Dorsolateral prefrontal cortex (tissue), 120 donors: ENCODE measurements at regions of chr1 and their contacts with region 1.

Region 1: GRCh38 chr1:100037927-100038659 is 68.3 kb downstream of the SLC35A3 start:
- DNase-seq: peak; percentile 81 to 94 (median 90)
- H3K4me3 ChIP-seq: peak overlapping the region; percentile 64 to 98 (median 89)
- H3K27ac ChIP-seq: peak overlapping the region; percentile 82 to 99 (median 97)
- H3K27me3 ChIP-seq: no peaks in the 10 kb centered on the region
- CTCF ChIP-seq: peak in 13 of 56 donors; percentile 3 to 43 (median 14)

Region 2: DNA sequence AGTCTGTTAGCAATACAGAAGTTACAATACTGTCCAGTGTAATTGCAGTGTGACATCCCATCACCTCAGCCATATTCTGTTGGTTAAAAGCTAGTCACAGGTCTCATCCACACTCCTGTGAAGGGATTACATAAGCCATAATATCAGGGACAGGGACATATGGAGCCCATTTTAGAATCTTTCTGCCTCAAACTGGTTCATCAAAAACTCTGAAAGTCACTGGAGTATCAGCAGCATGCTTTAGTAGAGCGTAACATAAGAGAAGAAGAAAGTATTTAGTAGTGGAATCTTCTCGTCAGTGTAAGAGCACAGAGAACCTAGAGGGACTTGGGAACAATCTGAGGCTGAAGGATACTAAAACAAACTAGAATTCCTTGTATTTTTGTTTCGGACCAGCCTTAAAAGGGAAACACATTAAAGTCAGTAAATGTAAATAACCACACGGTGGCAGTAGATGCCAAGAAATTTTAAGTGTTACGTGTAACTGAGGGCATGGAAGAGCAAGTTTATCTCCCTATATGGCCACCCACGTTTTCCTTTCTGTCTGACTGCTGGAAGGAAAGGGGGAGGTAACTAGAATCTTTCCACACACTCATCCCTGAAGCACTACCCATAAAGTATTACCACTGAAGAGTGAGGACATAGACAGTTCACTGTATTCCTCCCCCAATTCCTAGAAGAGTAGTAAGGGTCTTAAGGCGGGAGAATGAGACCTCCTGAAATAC is 229.5 kb before region 1 on chr1:
- intact Hi-C with region 1: loop called in 1 of 2 experiments (anchors 5 kb)
- DNase-seq: peak in 1 of 10 donors; percentile 8
- H3K4me3 ChIP-seq: peak overlapping the region in 30 of 59 donors; percentile 3 to 46 (median 24)
- H3K27ac ChIP-seq: peak overlapping the region in 1 of 59 donors; percentile 24
- H3K27me3 ChIP-seq: peaks cover 0 to 14% (median 0%) of the 10 kb centered on the region in 45 donors
- CTCF ChIP-seq: peak; percentile 64 to 90 (median 77)

Region 3: DNA sequence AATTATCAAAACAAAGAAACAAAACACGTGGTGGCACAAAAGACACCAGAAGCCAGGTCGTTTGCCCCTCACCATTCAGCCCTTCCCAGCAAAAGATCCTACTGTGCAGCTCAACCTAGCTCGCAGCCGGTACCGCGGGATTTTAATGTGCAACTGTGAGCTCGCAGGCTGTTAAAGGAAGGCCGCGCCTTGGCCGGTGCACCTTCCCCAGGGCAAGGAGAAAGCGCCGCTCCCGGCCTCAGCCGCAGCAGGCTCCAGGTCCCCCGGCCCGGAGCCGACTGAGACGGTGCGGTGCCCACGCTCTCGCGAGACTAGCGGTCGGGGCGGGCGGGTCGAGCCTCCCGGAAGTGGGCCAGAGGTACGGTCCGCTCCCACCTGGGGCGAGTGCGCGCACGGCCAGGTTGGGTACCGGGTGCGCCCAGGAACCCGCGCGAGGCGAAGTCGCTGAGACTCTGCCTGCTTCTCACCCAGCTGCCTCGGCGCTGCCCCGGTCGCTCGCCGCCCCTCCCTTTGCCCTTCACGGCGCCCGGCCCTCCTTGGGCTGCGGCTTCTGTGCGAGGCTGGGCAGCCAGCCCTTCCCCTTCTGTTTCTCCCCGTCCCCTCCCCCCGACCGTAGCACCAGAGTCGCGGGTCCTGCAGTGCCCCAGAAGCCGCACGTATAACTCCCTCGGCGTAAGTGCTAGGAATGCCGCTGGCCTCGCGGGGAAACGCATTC is 188.2 kb before region 1 on chr1 and contains the start of gene AGL:
- intact Hi-C with region 1: loop called (anchors 2 to 10 kb)
- DNase-seq: peak; percentile 53 to 87 (median 78)
- H3K4me3 ChIP-seq: peak within 1 kb of the TSS; percentile 58 to 96 (median 86)
- H3K27ac ChIP-seq: peak within 1 kb of the TSS in 58 of 59 donors; percentile 6 to 94 (median 85)
- H3K27me3 ChIP-seq: no peaks in the 10 kb centered on the region
- CTCF ChIP-seq: peak in 11 of 56 donors; percentile 7 to 25 (median 16)
- total RNA-seq, gene AGL: 11.7 to 30.2 (median 20.9) TPM

Region 4: GRCh38 chr1:99969729-99970621 is 68.1 kb before region 1 on chr1 and contains the start of gene SLC35A3:
- intact Hi-C with region 1: loop called in 1 of 2 experiments (anchors 5 kb)
- DNase-seq: peak; percentile 61 to 90 (median 76)
- H3K4me3 ChIP-seq: peak within 1 kb of the TSS; percentile 59 to 98 (median 89)
- H3K27ac ChIP-seq: peak within 1 kb of the TSS in 54 of 59 donors; percentile 26 to 91 (median 74)
- H3K27me3 ChIP-seq: no peaks in the 10 kb centered on the region
- CTCF ChIP-seq: peak in 18 of 56 donors; percentile 2 to 34 (median 24)
- total RNA-seq, gene SLC35A3: 8.8 to 24.9 (median 17.4) TPM

Region 5: GRCh38 chr1:100145116-100145515 is 107.0 kb after region 1 on chr1:
- intact Hi-C with region 1: no loop called
- DNase-seq: no peak
- H3K4me3 ChIP-seq: no peak overlapping the region
- H3K27ac ChIP-seq: no peak overlapping the region
- H3K27me3 ChIP-seq: no peaks in the 10 kb centered on the region
- CTCF ChIP-seq: no peak

Region 6: DNA sequence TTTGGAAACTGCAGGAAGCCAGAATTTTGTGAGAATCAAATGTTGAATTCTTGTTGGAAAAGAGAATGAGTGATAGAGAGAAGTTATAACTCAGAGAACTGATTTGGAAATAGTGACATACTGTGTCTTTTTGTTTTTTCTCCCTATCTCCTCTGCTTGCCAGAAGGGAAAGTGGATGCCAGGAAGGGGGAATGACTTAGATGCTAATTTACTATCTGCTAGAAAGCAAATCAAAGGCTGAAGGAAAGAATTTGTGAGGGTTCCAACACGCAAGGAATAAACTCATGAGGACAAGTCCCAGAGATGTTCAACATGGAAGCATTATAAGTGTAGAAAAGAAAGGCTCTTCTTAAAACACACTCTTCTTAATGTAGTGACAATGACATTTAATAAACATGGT is 160.5 kb after region 1 on chr1:
- intact Hi-C with region 1: no loop called
- DNase-seq: no peak
- H3K4me3 ChIP-seq: no peak overlapping the region
- H3K27ac ChIP-seq: no peak overlapping the region
- H3K27me3 ChIP-seq: no peaks in the 10 kb centered on the region
- CTCF ChIP-seq: no peak

Region 7: DNA sequence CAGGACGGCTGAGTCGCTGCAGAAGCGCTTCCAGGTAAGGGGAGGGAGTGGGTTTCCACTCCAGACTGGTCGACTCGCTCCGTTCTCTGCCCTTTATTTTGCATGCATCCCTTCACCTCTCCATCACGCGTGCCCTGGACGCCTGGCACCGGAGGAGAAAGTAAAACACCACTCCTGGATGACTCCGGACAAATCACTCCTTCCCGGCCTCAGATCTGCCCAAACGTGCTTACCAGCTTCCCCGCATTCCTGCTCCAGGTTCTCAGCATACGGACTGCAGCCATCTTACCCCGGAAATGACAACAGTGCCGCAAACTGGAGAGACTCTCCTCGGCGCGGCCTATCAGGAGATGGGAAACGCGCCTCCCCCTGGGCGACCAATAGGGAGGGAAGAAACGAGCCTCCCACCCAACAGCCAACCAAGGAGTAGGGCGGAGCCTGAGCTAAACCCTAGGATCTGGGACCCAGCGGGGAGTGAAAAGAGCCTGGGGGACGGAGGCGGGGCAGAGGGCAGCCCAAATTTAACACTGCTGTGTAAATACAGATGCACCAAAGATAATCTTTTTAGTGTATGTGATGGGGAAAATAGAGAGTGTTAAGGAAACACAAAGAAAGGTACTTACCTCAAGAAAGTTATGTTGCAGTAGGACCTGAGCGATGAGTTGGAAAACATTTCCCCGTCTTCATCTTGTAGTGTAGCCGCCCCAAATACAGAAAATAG is 211.6 kb after region 1 on chr1 and contains the start of gene DBT:
- intact Hi-C with region 1: no loop called
- DNase-seq: peak; percentile 86 to 98 (median 97)
- H3K4me3 ChIP-seq: peak within 1 kb of the TSS; percentile 52 to 100 (median 90)
- H3K27ac ChIP-seq: peak within 1 kb of the TSS; percentile 35 to 95 (median 87)
- H3K27me3 ChIP-seq: no peaks in the 10 kb centered on the region
- CTCF ChIP-seq: peak in 30 of 56 donors; percentile 6 to 56 (median 26)
- total RNA-seq, gene DBT: 13.7 to 27.3 (median 20.7) TPM

Region 8: DNA sequence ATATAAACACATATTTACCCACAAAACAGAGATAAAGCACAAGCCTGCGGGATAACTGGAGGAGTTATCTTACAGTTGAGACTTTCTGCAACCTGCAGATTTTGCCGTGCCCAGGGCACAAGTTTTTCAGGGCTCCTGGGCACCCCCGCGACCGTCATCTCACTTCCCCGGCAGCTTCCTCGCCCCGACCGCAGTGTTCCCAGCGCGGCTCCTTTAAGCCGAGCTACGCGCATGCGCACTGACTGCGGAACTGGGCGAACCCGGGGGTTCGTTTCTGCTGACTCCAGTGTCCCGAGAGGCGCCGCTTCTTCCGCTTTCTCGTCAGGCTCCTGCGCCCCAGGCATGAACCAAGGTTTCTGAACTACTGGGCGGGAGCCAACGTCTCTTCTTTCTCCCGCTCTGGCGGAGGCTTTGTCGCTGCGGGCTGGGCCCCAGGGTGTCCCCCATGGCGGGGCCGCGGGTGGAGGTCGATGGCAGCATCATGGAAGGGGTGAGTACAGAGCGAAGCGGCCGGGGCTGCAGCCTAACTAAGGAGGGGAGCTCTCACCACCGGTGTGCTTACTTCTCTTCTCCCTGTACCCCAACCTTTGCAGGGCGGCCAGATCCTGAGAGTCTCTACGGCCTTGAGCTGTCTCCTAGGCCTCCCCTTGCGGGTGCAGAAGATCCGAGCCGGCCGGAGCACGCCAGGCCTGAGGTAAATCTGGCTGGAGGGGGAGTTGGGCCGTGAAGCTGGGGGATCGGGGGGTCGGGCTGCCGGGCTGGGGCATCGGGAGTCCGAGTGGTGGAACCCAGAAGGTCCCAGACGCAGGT is 228.0 kb after region 1 on chr1 and contains the start of gene RTCA:
- intact Hi-C with region 1: loop called in 1 of 2 experiments (anchors 10 kb)
- DNase-seq: peak; percentile 92 to 96 (median 95)
- H3K4me3 ChIP-seq: peak within 1 kb of the TSS; percentile 44 to 100 (median 94)
- H3K27ac ChIP-seq: peak within 1 kb of the TSS in 58 of 59 donors; percentile 6 to 94 (median 80)
- H3K27me3 ChIP-seq: no peaks in the 10 kb centered on the region
- CTCF ChIP-seq: peak in 32 of 56 donors; percentile 8 to 59 (median 34)
- total RNA-seq, gene RTCA: 16.4 to 47.7 (median 35.9) TPM

Region 9: GRCh38 chr1:100895540-100896483 is 857.7 kb after region 1 on chr1 and contains the start of gene SLC30A7:
- intact Hi-C with region 1: loop called (anchors 10 kb)
- DNase-seq: peak; percentile 89 to 96 (median 93)
- H3K4me3 ChIP-seq: peak within 1 kb of the TSS; percentile 68 to 98 (median 88)
- H3K27ac ChIP-seq: peak within 1 kb of the TSS; percentile 74 to 97 (median 92)
- H3K27me3 ChIP-seq: no peaks in the 10 kb centered on the region
- CTCF ChIP-seq: peak in 7 of 56 donors; percentile 9 to 37 (median 21)
- total RNA-seq, gene SLC30A7: 14.8 to 30.3 (median 21.4) TPM